ENCODE measurements at regions of chr9 and their contacts with region 1.

Region 1: DNA sequence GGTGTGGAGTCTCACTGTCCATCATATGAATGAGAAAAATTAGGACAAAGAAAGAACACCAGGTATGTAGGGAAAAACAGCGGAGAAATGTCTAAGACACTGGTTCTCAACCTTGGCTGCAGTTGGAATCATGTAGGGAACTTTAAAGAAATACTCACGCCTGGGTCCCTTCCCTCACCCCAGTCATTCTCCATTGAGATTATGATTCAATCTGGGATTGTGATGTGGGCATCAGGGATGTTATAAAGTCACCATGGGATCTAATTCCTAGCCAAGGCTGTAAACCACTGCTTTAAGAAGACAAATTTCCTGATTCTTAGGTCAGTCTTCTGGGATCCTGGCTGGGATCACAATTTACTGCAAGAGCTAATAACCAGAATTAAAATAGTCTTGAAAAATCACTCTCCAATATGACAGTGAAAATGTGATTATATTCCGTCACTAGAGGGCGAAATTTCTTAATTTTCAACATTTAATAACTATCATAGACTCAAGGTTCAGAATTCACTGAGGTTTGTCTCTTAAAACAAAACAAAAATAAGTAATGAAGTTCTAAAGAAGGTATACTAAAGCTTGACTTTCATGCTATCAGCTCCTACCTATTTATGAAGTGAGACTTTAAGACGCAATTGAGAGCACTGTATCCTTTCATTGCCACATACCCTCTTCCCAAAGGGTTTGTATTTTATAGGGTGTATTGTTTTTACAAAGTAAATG is 60.5 kb downstream of the GLDC start:
- DNase-seq: peak; percentile 65
- H3K4me3 ChIP-seq: no peak overlapping the region
- H3K27ac ChIP-seq: no peak overlapping the region
- H3K4me1 ChIP-seq: peaks cover 18% of the 10 kb centered on the region
- CTCF ChIP-seq: peak; percentile 85

Region 2: GRCh38 chr9:6667633-6668280 is 82.7 kb after region 1 on chr9:
- CTCF ChIA-PET with region 1: no interaction called
- POLR2A ChIA-PET with region 1: no interaction called
- intact Hi-C with region 1: loop called (anchors 1 kb)
- DNase-seq: peak; percentile 55
- H3K4me3 ChIP-seq: no peak overlapping the region
- H3K27ac ChIP-seq: no peak overlapping the region
- H3K4me1 ChIP-seq: no peaks in the 10 kb centered on the region
- CTCF ChIP-seq: peak; percentile 92

Region 3: GRCh38 chr9:6739218-6739617 is 154.2 kb after region 1 on chr9:
- CTCF ChIA-PET with region 1: no interaction called
- POLR2A ChIA-PET with region 1: no interaction called
- intact Hi-C with region 1: loop called (anchors 1 kb)
- DNase-seq: peak; percentile 31
- H3K4me3 ChIP-seq: no peak overlapping the region
- H3K27ac ChIP-seq: no peak overlapping the region
- H3K4me1 ChIP-seq: no peaks in the 10 kb centered on the region
- CTCF ChIP-seq: peak; percentile 69